Naive thymus-derived CD4-positive, alpha-beta T cell (primary cell): ENCODE measurements at regions of chr14 and their contacts with region 1.

Region 1: DNA sequence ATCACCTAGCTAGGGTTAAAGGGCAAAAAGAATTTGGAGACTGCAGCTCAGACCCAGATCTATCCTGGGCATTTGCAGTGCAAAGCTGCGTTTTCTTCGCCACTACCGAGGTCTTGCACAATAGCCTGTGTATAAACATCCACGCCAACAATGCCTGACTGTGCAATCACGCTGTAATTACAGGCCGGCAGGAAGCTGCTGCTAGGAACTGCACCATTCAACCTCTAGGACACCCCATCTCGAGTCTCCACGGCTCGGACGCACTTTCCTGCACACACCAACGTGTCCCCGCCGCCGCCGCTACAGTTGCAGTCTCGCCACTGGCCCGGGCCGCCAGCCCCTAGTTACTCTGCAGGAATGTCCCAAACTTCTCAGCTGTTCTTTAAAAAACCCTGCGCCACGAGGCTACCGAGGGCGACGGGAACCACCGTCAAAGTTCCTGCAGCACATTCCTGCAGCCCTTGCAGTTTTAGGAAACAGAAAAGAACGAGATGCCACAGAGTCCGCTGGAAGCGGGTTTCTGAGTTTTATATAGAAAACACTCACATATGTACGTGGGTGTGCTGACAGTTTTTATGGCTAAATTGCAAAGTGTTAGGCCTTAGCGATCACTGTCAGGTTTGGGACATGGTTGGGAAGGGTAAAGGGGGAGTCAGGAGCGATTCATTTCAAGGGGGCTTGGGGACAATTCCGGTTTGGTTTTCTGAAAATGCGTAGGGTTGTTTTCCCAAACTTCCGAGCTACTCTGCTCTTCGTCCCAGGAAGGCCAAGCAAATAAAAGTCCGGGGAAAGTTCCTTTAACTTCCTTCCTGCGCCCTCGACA is 65.5 kb upstream of the PTGR2 start:
- DNase-seq: peak; percentile 41 to 65 (median 60)
- ATAC-seq: peak; percentile 74
- H3K4me3 ChIP-seq: peak overlapping the region; percentile 91
- H3K4me3 Mint-ChIP-seq: peak overlapping the region; percentile 87 to 99 (median 97)
- H3K27ac ChIP-seq: peak overlapping the region; percentile 96
- H3K27ac Mint-ChIP-seq: peak overlapping the region; percentile 92 to 97 (median 94)
- H3K4me1 ChIP-seq: peaks cover 45% of the 10 kb centered on the region in 2 donors
- H3K4me1 Mint-ChIP-seq: peaks cover 50 to 73% (median 66%) of the 10 kb centered on the region in 7 donors
- H3K27me3 ChIP-seq: no peaks in the 10 kb centered on the region
- H3K27me3 Mint-ChIP-seq: no peaks in the 10 kb centered on the region

Region 2: DNA sequence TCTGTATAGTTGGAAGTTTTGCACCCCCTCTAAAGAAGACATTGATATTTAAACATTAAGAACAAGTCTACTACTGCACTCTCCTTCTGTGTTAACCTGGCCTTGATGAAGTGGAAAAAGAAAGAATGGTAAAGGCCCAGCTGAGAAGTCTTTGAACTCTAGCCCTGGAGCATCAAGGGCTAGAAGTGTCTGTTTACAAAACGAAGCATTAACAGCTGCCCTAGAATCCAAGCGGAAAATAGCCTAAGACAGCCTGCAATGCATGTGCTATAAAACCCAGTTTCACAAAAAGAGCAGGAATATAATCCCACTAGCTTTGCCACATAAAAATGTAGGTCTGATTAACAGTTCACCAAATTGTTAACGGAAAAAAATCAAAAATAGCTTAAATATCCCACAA is 388.3 kb before region 1 on chr14:
- CTCF ChIA-PET with region 1: no interaction called
- POLR2A ChIA-PET with region 1: no interaction called
- intact Hi-C with region 1: no loop called
- DNase-seq: no peak
- ATAC-seq: no peak
- H3K4me3 ChIP-seq: no peak overlapping the region
- H3K4me3 Mint-ChIP-seq: no peak overlapping the region
- H3K27ac ChIP-seq: no peak overlapping the region
- H3K27ac Mint-ChIP-seq: no peak overlapping the region
- H3K4me1 ChIP-seq: no peaks in the 10 kb centered on the region
- H3K4me1 Mint-ChIP-seq: peaks cover 3 to 21% (median 17%) of the 10 kb centered on the region in 7 donors
- H3K27me3 ChIP-seq: no peaks in the 10 kb centered on the region
- H3K27me3 Mint-ChIP-seq: no peaks in the 10 kb centered on the region

Region 3: GRCh38 chr14:73741386-73741875 is 44.7 kb before region 1 on chr14:
- CTCF ChIA-PET with region 1: interaction called, 11 read pairs
- POLR2A ChIA-PET with region 1: interaction called, 71 read pairs
- intact Hi-C with region 1: loop called (anchors 1 to 2 kb)
- DNase-seq: peak in 7 of 9 donors; percentile 54 to 75 (median 57)
- ATAC-seq: peak; percentile 78
- H3K4me3 ChIP-seq: peak overlapping the region; percentile 52
- H3K4me3 Mint-ChIP-seq: peak overlapping the region; percentile 66 to 95 (median 88)
- H3K27ac ChIP-seq: peak overlapping the region; percentile 72
- H3K27ac Mint-ChIP-seq: peak overlapping the region; percentile 77 to 99 (median 93)
- H3K4me1 ChIP-seq: peaks cover 65 to 69% of the 10 kb centered on the region in 2 donors
- H3K4me1 Mint-ChIP-seq: peaks cover 43 to 71% (median 67%) of the 10 kb centered on the region in 7 donors
- H3K27me3 ChIP-seq: no peaks in the 10 kb centered on the region
- H3K27me3 Mint-ChIP-seq: no peaks in the 10 kb centered on the region

Region 4: DNA sequence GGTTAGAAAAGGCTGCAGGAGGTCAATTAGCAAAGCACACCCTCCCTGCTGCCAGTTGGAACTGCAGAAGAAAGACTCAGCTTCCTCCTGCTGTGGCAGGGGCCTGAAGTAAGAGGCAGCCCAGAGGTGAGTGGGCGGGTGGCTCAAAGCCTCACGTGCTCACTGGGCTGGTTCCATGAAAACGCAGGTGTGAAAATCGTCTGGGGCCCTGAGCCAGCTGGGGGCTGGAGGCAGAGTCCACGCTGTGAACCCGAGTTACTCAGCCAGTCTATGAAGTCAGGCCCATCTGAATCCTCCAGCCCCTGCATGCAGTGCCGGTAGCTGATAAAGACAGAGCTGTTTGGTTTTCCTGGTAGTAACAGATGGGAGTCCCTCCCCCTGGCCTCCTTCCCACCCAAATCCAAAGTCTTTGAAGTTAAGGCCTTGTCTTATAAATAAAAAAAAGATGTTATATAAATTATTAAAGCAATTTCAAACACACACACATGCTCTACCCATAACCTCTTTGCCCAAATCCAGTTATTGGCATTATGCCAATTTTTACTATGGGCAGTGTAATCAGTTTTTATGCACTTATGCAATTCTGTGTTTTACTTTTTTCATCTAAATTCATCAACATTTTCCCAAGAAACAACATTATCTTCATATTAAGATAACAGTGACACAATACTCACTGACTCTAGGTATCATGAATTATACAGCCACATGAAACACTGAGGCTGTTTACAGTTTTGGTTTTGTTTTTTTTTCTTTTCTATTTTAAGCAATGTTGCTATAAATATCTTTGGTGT is 14.0 kb before region 1 on chr14:
- CTCF ChIA-PET with region 1: interaction called, 14 read pairs
- POLR2A ChIA-PET with region 1: interaction called, 137 read pairs
- intact Hi-C with region 1: loop called (anchors 1 kb)
- DNase-seq: peak in 8 of 9 donors; percentile 57 to 73 (median 65)
- ATAC-seq: peak; percentile 82
- H3K4me3 ChIP-seq: peak overlapping the region; percentile 24
- H3K4me3 Mint-ChIP-seq: peak overlapping the region; percentile 63 to 81 (median 74)
- H3K27ac ChIP-seq: peak overlapping the region; percentile 69
- H3K27ac Mint-ChIP-seq: peak overlapping the region; percentile 80 to 94 (median 92)
- H3K4me1 ChIP-seq: peaks cover 56 to 65% of the 10 kb centered on the region in 2 donors
- H3K4me1 Mint-ChIP-seq: peaks cover 57 to 79% (median 69%) of the 10 kb centered on the region in 7 donors
- H3K27me3 ChIP-seq: no peaks in the 10 kb centered on the region
- H3K27me3 Mint-ChIP-seq: no peaks in the 10 kb centered on the region

Region 5: DNA sequence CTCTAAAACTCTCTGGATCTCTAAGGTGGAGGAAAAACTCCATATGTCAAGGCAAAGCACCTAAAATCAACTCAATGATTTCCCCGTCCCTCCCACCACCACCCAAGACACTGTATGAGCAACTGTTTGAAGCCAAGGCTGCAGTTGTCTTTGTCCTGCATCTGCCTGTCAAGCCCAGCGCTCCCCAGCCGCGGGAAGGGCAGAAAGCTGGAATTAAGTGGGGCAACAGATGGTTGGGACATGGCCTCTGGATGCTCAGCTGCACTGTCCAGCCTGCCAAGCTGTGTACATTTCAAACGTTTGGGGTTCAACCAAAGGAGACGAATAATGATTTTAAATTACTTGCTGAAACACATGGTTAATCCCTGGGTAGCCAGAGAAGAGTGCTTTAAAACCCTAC is 23.3 kb after region 1 on chr14:
- CTCF ChIA-PET with region 1: no interaction called
- POLR2A ChIA-PET with region 1: no interaction called
- intact Hi-C with region 1: no loop called
- DNase-seq: no peak
- ATAC-seq: no peak
- H3K4me3 ChIP-seq: no peak overlapping the region
- H3K4me3 Mint-ChIP-seq: no peak overlapping the region
- H3K27ac ChIP-seq: no peak overlapping the region
- H3K27ac Mint-ChIP-seq: no peak overlapping the region
- H3K4me1 ChIP-seq: no peaks in the 10 kb centered on the region
- H3K4me1 Mint-ChIP-seq: peaks cover 0 to 9% (median 6%) of the 10 kb centered on the region in 7 donors
- H3K27me3 ChIP-seq: no peaks in the 10 kb centered on the region
- H3K27me3 Mint-ChIP-seq: peaks cover 0 to 9% (median 5%) of the 10 kb centered on the region in 5 donors

Region 6: DNA sequence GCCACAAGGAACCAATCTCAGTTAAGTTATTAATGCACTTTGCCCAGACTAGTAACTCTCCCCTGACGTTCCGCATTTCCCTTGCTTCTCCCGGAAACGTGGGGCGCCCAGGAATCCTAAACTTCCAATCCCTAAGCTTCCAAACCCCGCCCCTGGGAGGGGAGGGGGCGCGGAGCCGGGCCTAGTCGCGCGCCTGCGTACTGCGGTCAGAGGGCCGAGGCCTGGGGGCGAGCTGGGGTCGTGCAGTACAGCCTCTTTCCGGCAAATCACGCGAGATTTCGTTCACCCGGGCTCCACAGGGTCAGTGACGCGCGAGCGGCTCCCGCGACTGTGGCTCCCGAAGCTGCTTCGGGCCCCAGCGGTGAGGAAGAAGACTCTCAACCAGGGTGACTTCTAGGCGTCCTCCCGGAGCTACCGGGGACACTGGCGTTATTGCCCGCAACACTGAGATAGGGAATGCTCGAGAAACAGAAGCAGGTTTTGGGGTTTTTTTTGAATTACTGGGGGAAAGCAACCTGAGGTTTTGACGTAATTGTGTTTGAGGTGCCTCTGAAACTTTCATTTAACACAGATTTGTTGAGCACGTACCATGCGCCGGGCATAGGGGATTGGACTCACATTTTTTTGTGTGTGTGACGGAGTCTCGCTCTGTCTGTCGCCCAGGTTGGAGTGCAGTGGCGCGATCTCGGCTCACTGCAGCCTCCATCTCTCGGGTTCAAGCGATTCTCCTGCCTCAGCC is 65.7 kb after region 1 on chr14 and contains the start of gene PTGR2:
- CTCF ChIA-PET with region 1: no interaction called
- POLR2A ChIA-PET with region 1: interaction called, 5 read pairs
- intact Hi-C with region 1: loop called in 1 of 2 experiments (anchors 2 kb)
- DNase-seq: peak; percentile 79 to 92 (median 86)
- ATAC-seq: peak; percentile 98
- H3K4me3 ChIP-seq: peak within 1 kb of the TSS; percentile 76
- H3K4me3 Mint-ChIP-seq: peak within 1 kb of the TSS; percentile 88 to 99 (median 96)
- H3K27ac ChIP-seq: peak within 1 kb of the TSS; percentile 85
- H3K27ac Mint-ChIP-seq: peak within 1 kb of the TSS; percentile 92 to 99 (median 97)
- H3K4me1 ChIP-seq: peaks cover 8 to 9% of the 10 kb centered on the region in 2 donors
- H3K4me1 Mint-ChIP-seq: peaks cover 3 to 28% (median 21%) of the 10 kb centered on the region in 7 donors
- H3K27me3 ChIP-seq: no peaks in the 10 kb centered on the region
- H3K27me3 Mint-ChIP-seq: no peaks in the 10 kb centered on the region
- total RNA-seq, gene PTGR2: 1.2 to 7.9 (median 1.8) TPM

Region 7: DNA sequence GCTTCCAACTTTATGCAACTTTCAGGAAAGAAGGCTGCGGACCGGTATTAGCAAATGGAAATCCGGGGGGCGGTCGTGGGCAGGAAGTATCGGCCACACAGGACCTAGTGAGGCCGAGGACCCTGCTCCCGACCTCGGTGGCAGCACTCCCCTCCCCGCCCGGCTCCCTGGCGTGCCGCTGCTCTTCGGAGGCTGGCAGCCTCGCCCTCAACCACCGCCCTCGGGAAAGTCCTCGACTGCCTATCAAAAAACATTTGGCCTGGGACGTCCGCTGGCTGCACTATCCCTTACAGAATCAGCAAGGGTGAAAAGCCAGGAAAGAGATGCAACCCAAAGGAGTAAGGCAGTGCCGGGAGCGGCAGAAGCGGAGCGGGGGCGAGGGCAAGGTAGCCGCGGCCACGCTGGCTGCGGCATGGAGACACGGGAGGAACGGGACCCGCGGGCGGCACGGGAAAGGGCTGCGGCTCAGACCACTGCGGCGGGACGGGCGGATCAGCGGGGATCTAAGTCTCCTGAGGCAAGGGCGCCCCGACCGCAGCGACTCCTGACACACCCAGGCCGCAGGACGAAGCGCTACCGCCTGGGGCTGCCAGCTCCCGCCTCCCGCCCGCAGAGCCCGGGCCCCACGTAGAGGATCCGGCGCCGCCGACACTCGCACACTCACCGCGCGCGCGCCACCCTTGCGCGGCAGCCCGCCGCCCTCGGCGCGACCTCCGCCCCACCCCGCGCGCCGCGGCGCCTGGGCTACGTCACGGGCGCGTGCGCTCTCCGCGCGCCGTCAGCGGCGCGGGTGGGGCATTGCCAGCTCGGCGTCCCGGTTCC is 232.7 kb after region 1 on chr14 and contains the starts of genes BBOF1 and ENTPD5:
- CTCF ChIA-PET with region 1: no interaction called
- POLR2A ChIA-PET with region 1: no interaction called
- intact Hi-C with region 1: loop called in 1 of 2 experiments (anchors 2 kb)
- DNase-seq: peak; percentile 83 to 89 (median 88)
- ATAC-seq: peak; percentile 98
- H3K4me3 ChIP-seq: peak within 1 kb of the TSS; percentile 79
- H3K4me3 Mint-ChIP-seq: peak within 1 kb of the TSS; percentile 80 to 97 (median 94)
- H3K27ac ChIP-seq: peak within 1 kb of the TSS; percentile 93
- H3K27ac Mint-ChIP-seq: peak within 1 kb of the TSS; percentile 89 to 98 (median 96)
- H3K4me1 ChIP-seq: peaks cover 6 to 10% of the 10 kb centered on the region in 2 donors
- H3K4me1 Mint-ChIP-seq: peaks cover 7 to 24% (median 14%) of the 10 kb centered on the region in 7 donors
- H3K27me3 ChIP-seq: no peaks in the 10 kb centered on the region
- H3K27me3 Mint-ChIP-seq: peaks cover 0 to 2% (median 0%) of the 10 kb centered on the region in 5 donors
- total RNA-seq, gene BBOF1: 0.80 to 4.0 (median 2.6) TPM
- total RNA-seq, gene ENTPD5: 8.6 to 17.1 (median 11.2) TPM